Activated CD8-positive, alpha-beta T cell treated with anti-CD3 and anti-CD28 coated beads, Interleukin-2, amount 10 ng/mL, durations not matched to agents 7 days and 5 days (primary cell): ENCODE measurements at regions of chr14 and their contacts with region 1.

Region 1: DNA sequence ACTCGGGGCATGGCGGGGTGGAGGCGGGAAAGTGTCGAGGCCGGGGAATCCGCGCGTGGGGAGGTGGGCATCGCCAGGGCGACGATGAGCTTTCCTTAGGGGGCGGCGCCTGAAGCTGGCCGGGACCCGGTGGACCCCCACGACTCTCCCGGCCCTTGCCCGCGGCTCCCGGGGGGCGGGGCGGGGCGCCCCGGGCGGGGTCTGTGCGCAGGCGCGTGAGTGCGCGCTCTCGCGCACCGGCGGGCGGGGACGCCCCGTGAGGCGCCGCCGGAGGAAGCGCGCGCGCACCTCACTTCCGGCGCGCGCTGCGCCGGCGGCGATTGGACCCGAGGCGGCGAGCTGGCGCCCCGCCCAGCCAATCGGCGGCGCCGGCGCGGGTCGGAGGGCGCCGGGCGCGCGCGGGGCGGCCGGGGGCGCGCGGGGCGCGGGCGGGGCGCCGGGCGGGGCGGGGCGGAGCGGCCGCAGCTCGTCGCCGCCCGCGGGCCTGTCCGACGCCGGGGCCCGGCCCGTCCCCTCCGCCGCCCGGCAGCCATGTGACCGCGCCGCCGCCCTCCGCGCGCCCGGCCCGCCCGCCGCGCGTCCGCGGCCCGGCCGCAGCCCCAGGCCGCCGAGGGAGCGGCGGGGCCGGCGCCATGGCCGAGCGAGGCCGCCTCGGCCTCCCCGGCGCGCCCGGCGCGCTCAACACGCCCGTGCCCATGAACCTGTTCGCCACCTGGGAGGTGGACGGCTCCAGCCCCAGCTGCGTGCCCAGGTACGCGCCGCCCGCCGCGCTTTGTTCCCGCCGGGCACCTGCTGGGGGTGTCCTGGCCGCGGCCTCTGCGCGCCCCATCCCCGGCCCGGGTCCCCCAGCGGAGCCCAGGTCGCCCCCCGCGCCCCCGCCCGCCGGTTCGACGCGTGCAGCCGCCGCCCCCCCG is at the start of gene PACS2:
- DNase-seq: peak; percentile 75
- ATAC-seq: peak; percentile 80
- H3K4me3 Mint-ChIP-seq: peak within 1 kb of the TSS; percentile 88
- H3K27ac Mint-ChIP-seq: peak within 1 kb of the TSS; percentile 84
- H3K4me1 Mint-ChIP-seq: peaks cover 37% of the 10 kb centered on the region
- H3K27me3 Mint-ChIP-seq: no peaks in the 10 kb centered on the region
- total RNA-seq, gene PACS2: 32.9 to 38.5 TPM

Region 2: DNA sequence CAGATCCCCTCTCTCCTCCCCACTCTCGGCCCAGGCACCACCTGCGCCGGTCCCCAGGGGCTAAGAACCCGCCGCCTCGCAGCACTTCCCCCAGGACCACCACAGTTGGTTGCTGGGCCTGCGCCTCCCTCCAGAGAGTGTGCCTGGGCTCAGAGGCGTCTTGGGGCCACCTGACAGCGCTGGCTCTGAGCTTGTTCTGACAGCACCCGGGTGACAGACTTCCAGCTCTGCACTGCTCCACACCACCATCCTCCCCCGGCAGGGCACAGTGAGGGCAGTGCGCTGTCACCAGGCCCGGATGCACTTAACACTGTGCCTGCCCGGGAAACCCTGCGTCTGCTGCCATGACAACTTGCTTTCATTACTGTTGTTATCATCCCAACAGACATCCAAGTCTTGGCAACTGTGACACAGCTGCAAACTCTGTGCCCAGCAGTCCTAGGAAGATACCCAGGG is 20.4 kb before region 1 on chr14:
- CTCF ChIA-PET with region 1: interaction called, 3 read pairs
- POLR2A ChIA-PET with region 1: interaction called, 56 read pairs
- DNase-seq: peak; percentile 84
- ATAC-seq: peak; percentile 91
- H3K4me3 Mint-ChIP-seq: peak overlapping the region; percentile 45
- H3K27ac Mint-ChIP-seq: peak overlapping the region; percentile 91
- H3K4me1 Mint-ChIP-seq: peaks cover 54% of the 10 kb centered on the region
- H3K27me3 Mint-ChIP-seq: no peaks in the 10 kb centered on the region

Region 3: DNA sequence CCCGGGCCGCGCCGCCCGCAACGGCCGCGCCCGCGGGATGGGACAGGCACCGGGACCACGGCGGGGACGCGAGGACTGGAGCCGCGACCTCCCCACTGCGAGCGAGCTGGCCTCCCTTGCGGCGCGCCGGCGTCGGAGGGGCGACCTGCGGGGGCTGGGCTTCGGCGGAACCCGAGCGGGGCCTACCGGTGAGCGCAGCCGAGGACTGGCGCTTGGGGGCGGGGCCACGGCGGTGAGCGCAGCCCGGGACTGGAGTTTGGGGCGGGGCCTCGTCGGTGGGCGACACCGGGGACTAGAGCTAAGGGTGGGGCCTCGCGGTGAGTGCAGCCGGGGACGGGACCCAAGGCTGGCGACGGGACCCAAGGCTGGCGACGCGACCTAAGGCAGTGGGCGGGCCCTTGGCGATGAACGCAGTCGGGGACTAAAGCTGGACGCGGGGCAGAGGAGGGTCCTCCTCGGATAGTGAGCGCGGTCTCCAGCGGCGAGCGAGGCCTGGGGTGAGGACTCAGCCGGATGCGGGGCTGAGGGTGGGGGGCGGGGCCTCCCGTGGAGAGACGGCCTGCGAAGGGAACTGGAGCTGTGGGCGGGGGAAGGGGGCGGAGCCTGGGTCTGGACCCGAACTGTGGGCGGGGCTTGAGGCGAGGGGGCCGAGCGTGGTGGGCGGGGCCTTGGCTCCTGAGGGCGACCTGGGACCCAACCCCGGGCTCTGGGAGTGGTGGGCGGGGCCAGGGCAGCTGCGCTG is 13.6 kb before region 1 on chr14 and contains the start of gene BRF1:
- CTCF ChIA-PET with region 1: interaction called, 13 read pairs
- POLR2A ChIA-PET with region 1: interaction called, 56 read pairs
- DNase-seq: peak; percentile 100
- ATAC-seq: peak; percentile 91
- H3K4me3 Mint-ChIP-seq: peak within 1 kb of the TSS; percentile 87
- H3K27ac Mint-ChIP-seq: peak within 1 kb of the TSS; percentile 95
- H3K4me1 Mint-ChIP-seq: peaks cover 47% of the 10 kb centered on the region
- H3K27me3 Mint-ChIP-seq: no peaks in the 10 kb centered on the region
- total RNA-seq, gene BRF1: 42.1 to 44.7 TPM

Region 4: DNA sequence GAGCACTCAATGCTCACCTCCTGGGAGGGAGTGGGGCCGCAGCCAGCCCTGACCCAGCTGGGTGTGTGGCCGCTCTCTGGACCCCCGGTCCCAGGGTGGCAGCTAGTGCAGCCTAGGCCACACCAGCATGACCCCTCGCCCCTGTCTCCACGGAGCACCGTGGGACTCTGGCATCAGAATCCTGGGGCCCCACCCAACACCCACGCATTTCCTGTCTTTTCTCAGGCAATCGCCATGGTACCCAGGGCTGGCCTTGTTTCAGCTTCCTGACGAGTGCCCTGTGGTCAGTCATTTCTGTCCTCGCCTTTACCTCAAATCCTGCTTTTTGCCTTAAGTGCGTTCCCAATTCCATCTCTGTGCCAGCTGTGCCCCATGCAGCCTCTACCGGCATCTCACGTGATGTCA is 15.9 kb after region 1 on chr14:
- CTCF ChIA-PET with region 1: no interaction called
- POLR2A ChIA-PET with region 1: no interaction called
- DNase-seq: no peak
- ATAC-seq: no peak
- H3K4me3 Mint-ChIP-seq: no peak overlapping the region
- H3K27ac Mint-ChIP-seq: no peak overlapping the region
- H3K4me1 Mint-ChIP-seq: peaks cover 33% of the 10 kb centered on the region
- H3K27me3 Mint-ChIP-seq: no peaks in the 10 kb centered on the region

Region 5: GRCh38 chr14:105389976-105390848 is 75.7 kb after region 1 on chr14:
- CTCF ChIA-PET with region 1: no interaction called
- POLR2A ChIA-PET with region 1: no interaction called
- DNase-seq: no peak
- ATAC-seq: peak; percentile 58
- H3K4me3 Mint-ChIP-seq: no peak overlapping the region
- H3K27ac Mint-ChIP-seq: peak overlapping the region; percentile 71
- H3K4me1 Mint-ChIP-seq: peaks cover 10% of the 10 kb centered on the region
- H3K27me3 Mint-ChIP-seq: no peaks in the 10 kb centered on the region